ENCODE measurements at regions of chr4 and their contacts with region 1.

Region 1: GRCh38 chr4:8117278-8117682 is 41.3 kb downstream of the ABLIM2 start:
- DNase-seq: no peak

Region 2: DNA sequence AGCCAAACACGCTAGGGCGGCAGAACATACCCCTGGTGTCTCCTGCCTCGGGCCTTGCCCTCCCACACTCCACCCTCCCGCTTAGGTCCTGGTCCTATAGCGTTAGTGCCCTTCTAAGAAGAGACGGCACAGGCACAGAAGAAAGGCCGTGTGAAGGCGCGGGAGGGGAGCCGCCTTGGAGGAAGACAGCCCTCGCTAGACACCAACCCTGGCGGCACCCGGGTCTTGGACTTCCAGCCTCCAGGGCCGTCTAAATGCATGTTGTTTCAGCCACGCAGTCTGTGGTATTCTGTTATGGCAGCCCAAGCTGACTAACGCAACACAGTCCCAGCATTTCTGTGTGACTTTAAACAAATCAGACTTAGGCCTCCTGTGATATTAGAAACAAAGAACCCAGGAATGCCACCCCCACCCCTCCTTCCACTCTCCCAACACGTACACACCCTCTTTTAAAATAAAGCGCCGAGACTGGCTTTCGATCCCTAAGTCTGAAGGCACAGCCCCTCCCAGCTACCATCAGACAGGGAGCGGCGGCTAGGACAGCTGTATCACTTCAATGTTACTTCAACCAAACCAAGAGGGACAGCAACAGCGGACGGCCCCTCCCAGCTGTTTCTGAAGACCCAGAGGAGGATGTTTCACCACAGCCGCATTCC is 305.6 kb before region 1 on chr4:
- intact Hi-C with region 1: no loop called
- DNase-seq: no peak

Region 3: DNA sequence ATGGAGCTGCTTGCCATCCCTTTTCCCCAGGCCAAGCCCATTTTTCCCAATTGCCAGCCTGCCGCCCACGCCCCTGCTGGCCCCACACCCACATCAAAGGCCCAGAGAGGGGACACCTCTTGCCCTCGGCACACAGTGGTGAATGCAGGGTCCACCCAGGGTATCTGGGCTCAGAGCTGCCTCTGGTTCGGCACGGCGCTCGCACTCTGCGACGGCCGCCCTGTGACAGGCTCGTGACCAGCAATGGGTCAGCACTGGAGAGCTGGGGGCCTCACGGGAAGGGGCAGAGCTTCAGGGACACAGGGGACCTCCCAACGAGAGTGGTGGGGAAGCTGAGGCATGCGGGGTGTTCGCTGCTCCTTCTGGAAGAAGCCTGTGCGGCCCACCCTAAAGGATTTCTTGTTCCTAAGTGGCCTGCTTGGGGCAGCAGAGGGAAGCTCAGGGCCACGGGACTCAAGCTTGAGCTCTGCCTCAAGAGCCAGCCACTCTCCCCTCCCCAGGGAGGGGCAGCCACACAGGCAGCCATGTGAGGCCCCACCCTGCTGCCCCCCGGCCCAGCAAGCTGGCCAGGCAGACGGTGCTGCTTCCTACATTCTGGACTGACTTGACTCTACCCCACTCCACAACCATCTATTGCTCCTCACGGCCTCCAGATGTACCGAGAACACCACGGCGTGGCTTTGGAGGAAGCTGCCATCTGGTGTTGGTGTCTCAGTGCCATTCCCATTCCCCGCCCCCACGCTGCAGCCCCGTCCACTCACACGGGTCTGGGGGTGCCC is 32.4 kb before region 1 on chr4:
- intact Hi-C with region 1: loop called in 1 of 2 experiments (anchors 1 kb)
- DNase-seq: no peak

Measured in posterior vena cava (tissue), 2 donors.